B cell (primary cell): ENCODE measurements at regions of chr6 and their contacts with region 1.

Region 1: DNA sequence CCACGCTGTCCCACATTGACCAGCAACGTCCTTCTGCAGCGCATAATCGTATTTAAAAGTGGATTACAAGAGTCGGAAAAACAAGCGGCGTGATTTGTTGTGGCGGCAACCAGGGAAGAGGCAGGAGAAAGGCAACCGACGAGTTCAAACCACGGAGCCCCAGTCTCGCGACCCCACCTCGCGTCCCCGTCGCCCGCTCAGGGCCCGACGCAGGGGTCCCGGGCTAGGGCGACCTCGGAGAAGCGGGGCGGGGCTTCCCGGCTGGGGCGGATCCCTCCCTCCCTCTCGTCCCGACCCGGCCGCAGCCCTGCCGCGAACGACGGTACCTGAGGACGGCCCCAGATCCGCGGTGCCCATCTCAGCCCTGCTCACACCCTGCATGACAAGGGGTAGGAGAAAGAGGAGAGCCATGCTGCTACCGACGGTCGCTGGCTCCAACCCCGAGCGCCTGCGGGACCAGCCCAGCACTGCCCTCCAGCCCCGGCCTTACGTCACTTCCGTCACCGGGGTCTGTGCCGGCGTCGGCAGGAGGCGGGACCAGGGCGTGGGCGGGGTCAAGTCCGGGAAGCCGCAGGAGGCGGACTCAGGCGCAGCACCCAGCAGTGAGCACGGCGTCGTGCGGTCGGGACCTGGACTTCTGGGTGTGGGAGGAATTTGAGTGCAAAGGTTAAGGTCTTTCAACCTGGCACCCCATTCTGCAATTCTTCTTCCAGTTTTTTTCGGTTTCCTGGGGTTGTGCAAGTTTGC is at the start of gene IFNGR1:
- DNase-seq: peak; percentile 96
- ATAC-seq: peak; percentile 86
- H3K4me3 ChIP-seq: peak within 1 kb of the TSS; percentile 76 to 99 (median 88)
- H3K4me3 Mint-ChIP-seq: peak within 1 kb of the TSS; percentile 97
- H3K27ac ChIP-seq: peak within 1 kb of the TSS; percentile 95 to 97
- H3K27ac Mint-ChIP-seq: peak within 1 kb of the TSS; percentile 97
- H3K4me1 ChIP-seq: peaks cover 78 to 81% of the 10 kb centered on the region in 2 donors
- H3K4me1 Mint-ChIP-seq: peaks cover 79% of the 10 kb centered on the region
- H3K27me3 ChIP-seq: no peaks in the 10 kb centered on the region
- H3K27me3 Mint-ChIP-seq: no peaks in the 10 kb centered on the region
- CTCF ChIP-seq: no peak
- total RNA-seq, gene IFNGR1: 48.2 and 51.2 TPM in 2 replicates

Region 2: GRCh38 chr6:136822376-136823127 is 396.5 kb before region 1 on chr6 and contains the start of gene PEX7:
- CTCF ChIA-PET with region 1: no interaction called
- POLR2A ChIA-PET with region 1: no interaction called
- intact Hi-C with region 1: loop called (anchors 5 kb)
- DNase-seq: peak; percentile 94
- ATAC-seq: peak; percentile 91
- H3K4me3 ChIP-seq: peak within 1 kb of the TSS; percentile 45 to 87 (median 71)
- H3K4me3 Mint-ChIP-seq: peak within 1 kb of the TSS; percentile 90
- H3K27ac ChIP-seq: peak within 1 kb of the TSS; percentile 65 to 95
- H3K27ac Mint-ChIP-seq: peak within 1 kb of the TSS; percentile 91
- H3K4me1 ChIP-seq: peaks cover 11 to 12% of the 10 kb centered on the region in 2 donors
- H3K4me1 Mint-ChIP-seq: peaks cover 18% of the 10 kb centered on the region
- H3K27me3 ChIP-seq: peaks cover 0 to 3% (median 0%) of the 10 kb centered on the region in 4 experiments
- H3K27me3 Mint-ChIP-seq: peaks cover 9% of the 10 kb centered on the region
- CTCF ChIP-seq: peak; percentile 82
- total RNA-seq, gene PEX7: 3.9 and 6.6 TPM in 2 replicates

Region 3: DNA sequence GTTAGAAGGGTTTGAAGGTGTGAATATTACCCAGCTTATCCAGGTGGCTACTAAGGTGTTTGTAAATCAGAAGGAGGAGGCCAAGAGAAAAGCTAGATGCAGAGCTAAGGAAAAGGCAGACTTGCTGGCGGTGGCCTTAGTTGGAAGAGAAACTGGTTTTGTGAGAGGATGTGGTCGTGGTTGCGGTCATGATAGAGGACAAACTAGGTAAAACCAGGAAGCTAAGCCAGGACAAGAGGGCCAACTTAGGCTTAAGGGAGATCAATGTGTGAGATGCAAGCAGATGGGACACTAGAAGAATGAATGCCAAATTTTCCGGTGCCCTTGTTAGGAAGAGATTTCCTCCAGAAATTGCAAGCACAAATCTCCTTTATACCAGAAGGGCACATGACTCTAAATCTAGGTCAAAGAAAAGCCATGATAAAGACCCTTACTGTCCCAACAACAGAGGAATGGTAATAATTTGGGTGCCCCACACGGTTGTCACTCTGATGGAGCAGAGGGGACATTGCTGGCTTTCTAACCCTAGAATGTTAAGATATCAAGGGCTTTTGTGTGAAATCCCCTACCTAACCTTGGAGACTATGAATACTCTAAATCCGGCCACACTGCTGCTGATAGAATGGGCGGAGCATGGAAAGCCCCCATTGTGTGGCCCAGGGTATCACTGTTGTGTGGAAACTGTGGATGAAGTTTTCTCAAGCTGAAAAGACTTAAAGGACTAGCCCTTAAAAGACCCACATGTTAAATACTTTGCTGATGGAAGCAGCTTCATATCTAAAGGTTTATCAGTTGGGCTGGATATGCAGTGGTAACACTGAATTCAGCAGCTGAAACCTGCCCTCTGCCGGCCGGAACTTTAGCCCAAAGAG is 53.5 kb before region 1 on chr6:
- CTCF ChIA-PET with region 1: no interaction called
- POLR2A ChIA-PET with region 1: interaction called, 12 read pairs
- intact Hi-C with region 1: loop called (anchors 5 kb)
- DNase-seq: peak; percentile 56
- ATAC-seq: peak; percentile 67
- H3K4me3 ChIP-seq: peak overlapping the region in 1 of 5 experiments; percentile 28
- H3K4me3 Mint-ChIP-seq: peak overlapping the region; percentile 59
- H3K27ac ChIP-seq: peak overlapping the region in 1 of 2 donors; percentile 10
- H3K27ac Mint-ChIP-seq: peak overlapping the region; percentile 70
- H3K4me1 ChIP-seq: peaks cover 42 to 56% of the 10 kb centered on the region in 2 donors
- H3K4me1 Mint-ChIP-seq: peaks cover 63% of the 10 kb centered on the region
- H3K27me3 ChIP-seq: no peaks in the 10 kb centered on the region
- H3K27me3 Mint-ChIP-seq: no peaks in the 10 kb centered on the region
- CTCF ChIP-seq: no peak

Region 4: DNA sequence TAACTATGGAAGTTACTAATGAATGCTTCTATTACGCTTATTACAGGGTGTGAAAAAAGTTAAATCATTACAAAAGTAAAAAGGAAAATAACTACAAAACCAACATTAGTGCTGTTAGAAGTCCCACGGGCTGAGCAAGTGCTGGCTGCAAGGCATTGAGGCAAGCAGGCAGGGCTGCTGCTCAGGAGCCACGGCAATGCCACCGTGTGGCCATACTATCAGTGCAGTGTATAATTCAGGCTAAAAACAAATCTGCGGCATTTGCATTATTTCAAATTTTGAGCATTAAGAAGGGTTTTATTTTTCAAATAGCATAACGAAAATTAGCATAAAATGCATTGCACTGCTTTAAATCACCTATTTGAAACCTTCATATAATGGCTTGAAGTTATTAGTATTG is 17.0 kb before region 1 on chr6:
- CTCF ChIA-PET with region 1: interaction called, 7 read pairs
- POLR2A ChIA-PET with region 1: interaction called, 3 read pairs
- intact Hi-C with region 1: loop called (anchors 2 kb)
- DNase-seq: peak; percentile 55
- ATAC-seq: peak; percentile 74
- H3K4me3 ChIP-seq: no peak overlapping the region
- H3K4me3 Mint-ChIP-seq: no peak overlapping the region
- H3K27ac ChIP-seq: no peak overlapping the region
- H3K27ac Mint-ChIP-seq: peak overlapping the region; percentile 61
- H3K4me1 ChIP-seq: peaks cover 10 to 11% of the 10 kb centered on the region in 2 donors
- H3K4me1 Mint-ChIP-seq: peaks cover 31% of the 10 kb centered on the region
- H3K27me3 ChIP-seq: no peaks in the 10 kb centered on the region
- H3K27me3 Mint-ChIP-seq: no peaks in the 10 kb centered on the region
- CTCF ChIP-seq: peak; percentile 67

Region 5: GRCh38 chr6:137261393-137262160 is 42.5 kb after region 1 on chr6:
- CTCF ChIA-PET with region 1: no interaction called
- POLR2A ChIA-PET with region 1: interaction called, 8 read pairs
- intact Hi-C with region 1: loop called (anchors 2 kb)
- DNase-seq: peak; percentile 58
- ATAC-seq: peak; percentile 88
- H3K4me3 ChIP-seq: no peak overlapping the region
- H3K4me3 Mint-ChIP-seq: peak overlapping the region; percentile 14
- H3K27ac ChIP-seq: peak overlapping the region; percentile 25 to 40
- H3K27ac Mint-ChIP-seq: peak overlapping the region; percentile 27
- H3K4me1 ChIP-seq: peaks cover 19 to 25% of the 10 kb centered on the region in 2 donors
- H3K4me1 Mint-ChIP-seq: peaks cover 30% of the 10 kb centered on the region
- H3K27me3 ChIP-seq: no peaks in the 10 kb centered on the region
- H3K27me3 Mint-ChIP-seq: no peaks in the 10 kb centered on the region
- CTCF ChIP-seq: no peak

Region 6: GRCh38 chr6:137415127-137415833 is 196.2 kb after region 1 on chr6:
- CTCF ChIA-PET with region 1: no interaction called
- POLR2A ChIA-PET with region 1: no interaction called
- intact Hi-C with region 1: no loop called
- DNase-seq: peak; percentile 81
- ATAC-seq: peak; percentile 97
- H3K4me3 ChIP-seq: peak overlapping the region; percentile 39 to 77 (median 63)
- H3K4me3 Mint-ChIP-seq: peak overlapping the region; percentile 89
- H3K27ac ChIP-seq: peak overlapping the region; percentile 14 to 65
- H3K27ac Mint-ChIP-seq: peak overlapping the region; percentile 43
- H3K4me1 ChIP-seq: peaks cover 8 to 9% of the 10 kb centered on the region in 2 donors
- H3K4me1 Mint-ChIP-seq: peaks cover 10% of the 10 kb centered on the region
- H3K27me3 ChIP-seq: peaks cover 0 to 9% (median 3%) of the 10 kb centered on the region in 4 experiments
- H3K27me3 Mint-ChIP-seq: peaks cover 7% of the 10 kb centered on the region
- CTCF ChIP-seq: peak; percentile 79